ENCODE measurements at regions of chr13 and their contacts with region 1.

Region 1: GRCh38 chr13:52428295-52428694 is 22.1 kb downstream of the VPS36 start:
- DNase-seq: no peak
- ATAC-seq: peak; percentile 50 to 61
- H3K4me3 ChIP-seq: no peak overlapping the region
- H3K27ac ChIP-seq: peak overlapping the region in 1 of 4 donors; percentile 20
- H3K4me1 ChIP-seq: no peaks in the 10 kb centered on the region
- H3K27me3 ChIP-seq: no peaks in the 10 kb centered on the region
- CTCF ChIP-seq: no peak
- POLR2A ChIP-seq: no peak

Region 2: DNA sequence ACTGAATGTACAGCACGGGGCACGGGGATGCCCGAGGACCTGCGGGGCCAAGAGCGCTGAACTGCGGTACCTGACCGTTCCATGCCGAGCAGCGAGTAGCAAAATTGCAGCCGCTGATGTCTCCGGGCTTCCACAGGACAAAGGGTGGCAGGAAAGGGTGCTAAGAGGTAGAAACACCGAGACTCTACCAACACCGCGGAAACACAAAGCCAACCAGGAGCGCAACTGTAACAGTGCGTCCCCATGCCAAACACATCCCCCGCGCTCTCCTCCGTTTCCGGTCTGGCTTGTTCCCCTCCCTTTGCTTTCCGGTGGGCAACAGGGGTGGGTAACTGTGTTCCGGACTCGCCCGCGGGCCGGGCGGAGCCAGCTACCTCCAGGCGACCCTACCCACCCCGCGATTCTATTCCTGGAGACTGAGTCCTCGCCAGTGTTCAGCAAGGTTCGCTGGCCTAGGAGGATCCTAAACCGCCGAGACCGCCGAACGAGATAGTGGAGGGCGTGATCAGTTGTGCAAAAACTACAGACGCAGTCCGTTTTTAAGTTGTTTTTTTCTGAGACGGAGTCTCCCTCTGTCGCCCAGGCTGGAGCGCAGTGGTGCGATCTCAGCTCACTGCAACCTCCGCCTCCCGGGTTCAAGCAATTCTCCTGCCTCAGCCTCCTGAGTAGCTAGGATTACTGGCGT is 234.0 kb before region 1 on chr13:
- in situ Hi-C with region 1: loop called in 3 of 4 experiments (anchors 25 kb)
- intact Hi-C with region 1: no loop called
- DNase-seq: peak; percentile 69 to 81
- ATAC-seq: peak; percentile 93 to 94
- H3K4me3 ChIP-seq: peak overlapping the region; percentile 74 to 98 (median 88)
- H3K27ac ChIP-seq: peak overlapping the region; percentile 81 to 88 (median 87)
- H3K4me1 ChIP-seq: peaks cover 11 to 25% of the 10 kb centered on the region in 2 donors
- H3K27me3 ChIP-seq: no peaks in the 10 kb centered on the region
- CTCF ChIP-seq: no peak
- POLR2A ChIP-seq: peak in 1 of 2 donors; percentile 22

Measured in gastrocnemius medialis (tissue), 4 donors.